ENCODE measurements at regions of chr3 and their contacts with region 1.

Region 1: GRCh38 chr3:187319699-187320302 is 28.3 kb upstream of the MASP1 start:
- DNase-seq: peak; percentile 77
- H3K4me3 Mint-ChIP-seq: no peak overlapping the region
- H3K27ac Mint-ChIP-seq: no peak overlapping the region
- H3K4me1 Mint-ChIP-seq: peaks cover 6% of the 10 kb centered on the region
- H3K27me3 Mint-ChIP-seq: peaks cover 41% of the 10 kb centered on the region
- CTCF ChIP-seq: peak; percentile 80

Region 2: GRCh38 chr3:187112934-187113793 is 206.6 kb before region 1 on chr3:
- CTCF ChIA-PET with region 1: interaction called, 4 read pairs
- POLR2A ChIA-PET with region 1: no interaction called
- intact Hi-C with region 1: loop called (anchors 5 kb)
- DNase-seq: peak; percentile 63
- H3K4me3 Mint-ChIP-seq: no peak overlapping the region
- H3K27ac Mint-ChIP-seq: no peak overlapping the region
- H3K4me1 Mint-ChIP-seq: peaks cover 9% of the 10 kb centered on the region
- H3K27me3 Mint-ChIP-seq: no peaks in the 10 kb centered on the region
- CTCF ChIP-seq: peak; percentile 68

Region 3: GRCh38 chr3:187243933-187244524 is 75.8 kb before region 1 on chr3:
- CTCF ChIA-PET with region 1: interaction called, 11 read pairs
- POLR2A ChIA-PET with region 1: no interaction called
- intact Hi-C with region 1: no loop called
- DNase-seq: no peak
- H3K4me3 Mint-ChIP-seq: no peak overlapping the region
- H3K27ac Mint-ChIP-seq: no peak overlapping the region
- H3K4me1 Mint-ChIP-seq: peaks cover 8% of the 10 kb centered on the region
- H3K27me3 Mint-ChIP-seq: peaks cover 8% of the 10 kb centered on the region
- CTCF ChIP-seq: no peak

Region 4: GRCh38 chr3:187336322-187336721 is 16.5 kb after region 1 on chr3:
- CTCF ChIA-PET with region 1: interaction called, 45 read pairs
- POLR2A ChIA-PET with region 1: interaction called, 3 read pairs
- intact Hi-C with region 1: no loop called
- DNase-seq: no peak
- H3K4me3 Mint-ChIP-seq: no peak overlapping the region
- H3K27ac Mint-ChIP-seq: no peak overlapping the region
- H3K4me1 Mint-ChIP-seq: no peaks in the 10 kb centered on the region
- H3K27me3 Mint-ChIP-seq: peaks cover 71% of the 10 kb centered on the region
- CTCF ChIP-seq: no peak

Region 5: DNA sequence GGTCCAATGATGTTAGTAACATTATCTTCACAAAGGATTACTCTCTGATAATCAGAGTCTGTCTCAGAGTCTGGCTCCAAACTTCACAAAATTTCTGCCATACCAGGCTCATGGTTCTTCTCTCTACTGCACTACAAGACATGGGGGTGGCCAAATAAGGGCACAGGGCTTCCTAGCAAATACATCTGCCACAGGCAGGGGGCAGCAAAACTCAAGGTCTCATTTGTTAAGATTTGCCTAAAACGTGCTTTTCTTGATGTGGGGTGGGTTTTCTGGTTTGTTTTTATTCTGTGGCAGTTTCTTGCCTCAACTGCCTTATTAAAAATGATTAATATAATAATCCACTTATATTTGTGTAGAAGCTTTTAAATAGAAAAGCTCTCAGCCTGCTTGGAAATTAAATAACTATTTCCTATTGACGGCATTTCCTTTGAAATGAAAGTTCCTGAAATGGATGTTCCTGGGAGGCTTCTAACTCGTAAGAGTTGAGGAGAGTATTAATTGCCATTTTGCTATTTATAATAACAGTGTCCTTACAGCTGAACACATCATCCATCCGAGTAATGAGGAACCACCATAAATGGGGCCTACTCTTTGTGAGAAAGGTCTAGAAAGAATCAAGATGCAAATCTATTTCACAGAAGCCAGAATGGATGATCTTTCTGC is 296.6 kb after region 1 on chr3:
- CTCF ChIA-PET with region 1: interaction called, 158 read pairs
- POLR2A ChIA-PET with region 1: interaction called, 4 read pairs
- intact Hi-C with region 1: loop called (anchors 1 kb)
- DNase-seq: peak; percentile 76
- H3K4me3 Mint-ChIP-seq: no peak overlapping the region
- H3K27ac Mint-ChIP-seq: no peak overlapping the region
- H3K4me1 Mint-ChIP-seq: peaks cover 5% of the 10 kb centered on the region
- H3K27me3 Mint-ChIP-seq: peaks cover 36% of the 10 kb centered on the region
- CTCF ChIP-seq: peak; percentile 78

Region 6: DNA sequence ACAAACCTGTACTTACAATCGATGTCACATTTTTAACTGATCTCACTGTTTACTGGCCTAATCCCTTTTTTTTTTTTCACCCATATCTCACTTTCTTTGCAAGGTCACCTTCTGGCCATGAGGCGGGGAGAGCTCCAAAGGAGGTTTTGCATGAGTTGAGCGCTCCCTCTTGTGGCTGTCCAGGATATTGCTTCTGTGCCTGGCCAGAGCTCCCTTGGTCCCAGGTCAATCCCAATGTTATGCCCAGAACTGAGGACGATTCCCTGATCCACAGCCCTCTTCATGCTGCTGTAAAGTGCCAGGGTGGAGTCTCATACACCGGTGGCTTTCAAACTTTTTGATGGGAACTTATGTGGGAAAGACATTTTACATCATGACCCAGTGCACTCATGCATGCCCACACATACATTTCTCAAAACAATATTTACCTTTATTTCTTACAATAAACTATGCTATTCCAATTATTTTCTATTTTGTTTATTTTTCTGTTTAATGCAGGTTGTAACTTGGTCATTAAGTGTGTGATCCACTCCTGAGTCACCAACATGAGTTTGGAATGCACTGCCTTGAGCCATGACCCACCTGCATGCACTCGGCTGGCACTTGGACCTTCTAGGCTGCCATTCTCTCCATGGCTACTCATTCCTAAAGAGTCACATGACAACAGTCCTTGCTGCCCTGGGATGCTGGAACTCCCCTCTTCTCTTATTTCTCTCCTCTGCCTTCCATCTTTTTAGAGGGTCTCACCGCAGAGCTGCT is 360.0 kb after region 1 on chr3:
- CTCF ChIA-PET with region 1: interaction called, 629 read pairs
- POLR2A ChIA-PET with region 1: interaction called, 14 read pairs
- intact Hi-C with region 1: loop called (anchors 1 kb)
- DNase-seq: peak; percentile 78
- H3K4me3 Mint-ChIP-seq: no peak overlapping the region
- H3K27ac Mint-ChIP-seq: no peak overlapping the region
- H3K4me1 Mint-ChIP-seq: no peaks in the 10 kb centered on the region
- H3K27me3 Mint-ChIP-seq: peaks cover 69% of the 10 kb centered on the region
- CTCF ChIP-seq: peak; percentile 84

Region 7: GRCh38 chr3:187714404-187714979 is 394.7 kb after region 1 on chr3:
- CTCF ChIA-PET with region 1: interaction called, 92 read pairs
- POLR2A ChIA-PET with region 1: no interaction called
- intact Hi-C with region 1: loop called (anchors 1 kb)
- DNase-seq: peak; percentile 84
- H3K4me3 Mint-ChIP-seq: no peak overlapping the region
- H3K27ac Mint-ChIP-seq: no peak overlapping the region
- H3K4me1 Mint-ChIP-seq: peaks cover 6% of the 10 kb centered on the region
- H3K27me3 Mint-ChIP-seq: no peaks in the 10 kb centered on the region
- CTCF ChIP-seq: peak; percentile 89